Transverse colon (tissue), 4 donors: ENCODE measurements at regions of chr15 and their contacts with region 1.

Region 1: GRCh38 chr15:92077353-92078085 is 224.0 kb downstream of the SLCO3A1 start:
- DNase-seq: peak; percentile 75
- H3K4me3 ChIP-seq: no peak overlapping the region
- H3K27ac ChIP-seq: no peak overlapping the region
- H3K4me1 ChIP-seq: peaks cover 0 to 7% (median 0%) of the 10 kb centered on the region in 4 donors
- H3K27me3 ChIP-seq: no peaks in the 10 kb centered on the region
- CTCF ChIP-seq: peak; percentile 59 to 80 (median 68)
- EP300 ChIP-seq: no peak
- POLR2A ChIP-seq: no peak

Region 2: GRCh38 chr15:91291673-91292072 is 785.8 kb before region 1 on chr15:
- in situ Hi-C with region 1: loop called in 1 of 4 experiments (anchors 10 kb)
- intact Hi-C with region 1: no loop called
- DNase-seq: no peak
- H3K4me3 ChIP-seq: no peak overlapping the region
- H3K27ac ChIP-seq: no peak overlapping the region
- H3K4me1 ChIP-seq: peaks cover 0 to 6% (median 3%) of the 10 kb centered on the region in 4 donors
- H3K27me3 ChIP-seq: peaks cover 36% of the 10 kb centered on the region
- CTCF ChIP-seq: no peak
- EP300 ChIP-seq: no peak
- POLR2A ChIP-seq: no peak

Region 3: DNA sequence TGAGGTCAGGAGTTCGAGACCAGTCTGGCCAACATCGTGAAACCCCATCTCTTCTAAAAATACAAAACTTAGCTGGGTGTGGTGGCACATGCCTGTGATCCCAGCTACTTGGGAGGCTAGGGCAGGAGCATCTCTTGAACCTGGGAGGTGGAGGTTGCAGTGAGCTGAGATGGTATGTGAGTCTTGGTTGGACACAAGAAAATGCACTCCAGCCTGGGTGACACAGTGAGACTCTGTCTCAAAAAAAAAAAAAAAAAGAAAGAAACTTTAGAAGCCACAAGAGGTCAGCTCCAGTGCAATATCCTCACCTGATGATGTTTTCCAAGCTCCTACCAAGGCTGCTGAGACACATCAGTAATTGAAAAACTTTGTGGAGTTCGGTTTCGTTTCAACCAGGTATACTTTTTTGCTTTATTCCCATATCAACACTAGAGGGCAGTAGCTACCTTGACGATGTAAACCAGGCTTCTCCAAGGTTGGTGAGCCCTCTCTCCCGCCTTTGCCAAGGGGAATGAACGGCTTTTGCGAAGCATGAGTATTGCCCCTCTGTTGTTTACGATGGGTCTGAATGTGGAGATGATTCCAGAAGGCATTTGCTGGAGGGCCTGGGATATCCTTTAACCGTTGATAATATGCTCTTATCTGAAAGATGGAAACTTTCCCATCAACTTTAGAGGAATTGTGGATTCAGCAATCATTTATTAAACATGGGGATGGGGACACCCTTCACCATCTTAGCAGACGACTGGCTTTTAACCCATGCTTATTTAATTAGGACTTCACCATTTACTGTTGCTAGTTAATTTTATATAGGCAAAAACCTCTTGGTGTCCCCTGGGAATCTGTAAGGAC is 774.7 kb before region 1 on chr15:
- in situ Hi-C with region 1: loop called (anchors 10 kb)
- intact Hi-C with region 1: loop called (anchors 2 kb)
- DNase-seq: peak; percentile 16
- H3K4me3 ChIP-seq: no peak overlapping the region
- H3K27ac ChIP-seq: no peak overlapping the region
- H3K4me1 ChIP-seq: no peaks in the 10 kb centered on the region
- H3K27me3 ChIP-seq: peaks cover 15% of the 10 kb centered on the region
- CTCF ChIP-seq: peak; percentile 64 to 78 (median 74)
- EP300 ChIP-seq: no peak
- POLR2A ChIP-seq: no peak

Region 4: DNA sequence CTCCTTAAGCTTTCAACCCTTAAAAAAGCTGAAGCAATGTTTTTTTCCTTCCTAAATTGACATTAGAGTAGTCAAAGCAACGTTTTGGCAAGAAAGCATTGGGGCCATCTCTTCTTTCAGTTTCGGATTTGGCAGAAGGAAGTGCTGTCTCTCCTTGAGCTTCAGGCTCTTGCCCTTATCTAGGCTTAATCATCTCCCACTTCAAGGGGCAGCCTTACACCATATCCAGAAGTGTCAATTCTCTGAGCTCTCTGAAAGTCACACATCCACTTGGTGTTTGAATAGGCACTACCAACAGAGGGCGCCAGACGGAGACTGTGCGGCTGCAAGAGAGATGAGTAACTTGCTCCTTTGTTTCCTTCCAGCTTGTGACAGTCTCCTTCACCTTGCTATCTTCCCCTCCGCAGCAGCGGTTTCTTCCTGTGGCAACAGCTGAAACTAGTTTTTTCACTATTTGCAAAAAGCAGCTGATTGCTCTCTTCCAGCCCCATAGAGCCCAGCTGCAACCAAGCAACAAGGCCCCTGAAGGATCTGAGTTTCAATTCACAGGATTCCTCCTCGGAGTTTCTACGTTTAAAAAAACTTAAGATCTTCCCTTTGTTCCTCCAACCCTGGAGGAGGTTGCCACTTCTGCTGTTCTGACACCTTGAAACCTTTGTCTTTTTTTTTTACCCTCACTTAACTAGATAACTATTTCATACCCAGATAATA is 371.0 kb before region 1 on chr15:
- in situ Hi-C with region 1: loop called in 3 of 4 experiments (anchors 10 kb)
- intact Hi-C with region 1: no loop called
- DNase-seq: peak; percentile 79
- H3K4me3 ChIP-seq: no peak overlapping the region
- H3K27ac ChIP-seq: peak overlapping the region in 2 of 4 donors; percentile 33 to 37
- H3K4me1 ChIP-seq: peaks cover 0 to 3% (median 0%) of the 10 kb centered on the region in 4 donors
- H3K27me3 ChIP-seq: no peaks in the 10 kb centered on the region
- CTCF ChIP-seq: peak; percentile 77 to 89 (median 82)
- EP300 ChIP-seq: no peak
- POLR2A ChIP-seq: no peak

Region 5: GRCh38 chr15:91852741-91853510 is 224.6 kb before region 1 on chr15:
- in situ Hi-C with region 1: loop called in 3 of 4 experiments (anchors 10 kb)
- intact Hi-C with region 1: loop called (anchors 10 kb)
- DNase-seq: peak; percentile 79
- H3K4me3 ChIP-seq: peak overlapping the region; percentile 41 to 79 (median 72)
- H3K27ac ChIP-seq: peak overlapping the region; percentile 87 to 92 (median 90)
- H3K4me1 ChIP-seq: peaks cover 10 to 44% (median 29%) of the 10 kb centered on the region in 4 donors
- H3K27me3 ChIP-seq: no peaks in the 10 kb centered on the region
- CTCF ChIP-seq: peak; percentile 67 to 75 (median 72)
- EP300 ChIP-seq: no peak
- POLR2A ChIP-seq: peak; percentile 34

Region 6: GRCh38 chr15:92714477-92715401 is 637.2 kb after region 1 on chr15:
- in situ Hi-C with region 1: loop called in 2 of 4 experiments (anchors 25 kb)
- intact Hi-C with region 1: no loop called
- DNase-seq: peak; percentile 65
- H3K4me3 ChIP-seq: peak overlapping the region; percentile 24 to 62 (median 36)
- H3K27ac ChIP-seq: peak overlapping the region; percentile 73 to 82 (median 76)
- H3K4me1 ChIP-seq: peaks cover 0 to 4% (median 2%) of the 10 kb centered on the region in 4 donors
- H3K27me3 ChIP-seq: no peaks in the 10 kb centered on the region
- CTCF ChIP-seq: peak; percentile 81 to 91 (median 83)
- EP300 ChIP-seq: no peak
- POLR2A ChIP-seq: peak; percentile 21